Activated CD4-positive, alpha-beta T cell treated with anti-CD3 and anti-CD28 coated beads for 36 hours (primary cell): ENCODE measurements at regions of chr16 and their contacts with region 1.

Region 1: GRCh38 chr16:17467923-17468540 is 2.7 kb downstream of the XYLT1 start:
- DNase-seq: peak; percentile 72
- ATAC-seq: peak; percentile 17
- H3K4me3 Mint-ChIP-seq: peak overlapping the region; percentile 28
- H3K27ac Mint-ChIP-seq: peak overlapping the region; percentile 39
- H3K4me1 Mint-ChIP-seq: peaks cover 47% of the 10 kb centered on the region
- H3K27me3 Mint-ChIP-seq: no peaks in the 10 kb centered on the region

Region 2: DNA sequence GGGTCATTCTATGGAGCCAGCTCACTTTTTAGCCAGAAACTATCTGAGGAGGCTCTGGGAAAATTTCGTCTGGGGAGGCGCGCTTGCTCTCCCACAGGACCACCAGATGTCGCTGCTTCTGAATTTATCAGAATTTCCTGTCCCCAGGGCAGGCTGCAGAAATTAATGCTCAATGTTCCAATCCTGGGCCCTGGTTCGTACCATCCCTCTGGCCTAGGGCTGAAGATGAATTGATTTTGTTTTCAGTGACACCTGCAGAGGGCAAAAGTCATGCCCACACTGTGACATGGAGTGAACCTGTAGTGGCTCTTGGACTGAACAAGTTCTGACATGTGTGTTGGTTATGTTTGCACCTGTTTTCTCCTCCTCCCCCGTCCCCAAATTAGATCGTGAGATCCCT is 606.5 kb before region 1 on chr16:
- CTCF ChIA-PET with region 1: no interaction called
- POLR2A ChIA-PET with region 1: no interaction called
- intact Hi-C with region 1: loop called in 1 of 2 experiments (anchors 1 kb)
- DNase-seq: peak; percentile 70
- ATAC-seq: no peak
- H3K4me3 Mint-ChIP-seq: no peak overlapping the region
- H3K27ac Mint-ChIP-seq: no peak overlapping the region
- H3K4me1 Mint-ChIP-seq: no peaks in the 10 kb centered on the region
- H3K27me3 Mint-ChIP-seq: peaks cover 6% of the 10 kb centered on the region

Region 3: GRCh38 chr16:17211797-17212196 is 256.2 kb before region 1 on chr16:
- CTCF ChIA-PET with region 1: no interaction called
- POLR2A ChIA-PET with region 1: no interaction called
- intact Hi-C with region 1: loop called (anchors 5 to 10 kb)
- DNase-seq: peak; percentile 63
- ATAC-seq: peak; percentile 75
- H3K4me3 Mint-ChIP-seq: no peak overlapping the region
- H3K27ac Mint-ChIP-seq: no peak overlapping the region
- H3K4me1 Mint-ChIP-seq: peaks cover 17% of the 10 kb centered on the region
- H3K27me3 Mint-ChIP-seq: no peaks in the 10 kb centered on the region

Region 4: GRCh38 chr16:17277977-17278381 is 190.1 kb before region 1 on chr16:
- CTCF ChIA-PET with region 1: interaction called, 3 read pairs
- POLR2A ChIA-PET with region 1: interaction called, 5 read pairs
- intact Hi-C with region 1: loop called in 1 of 2 experiments (anchors 2 kb)
- DNase-seq: peak; percentile 20
- ATAC-seq: no peak
- H3K4me3 Mint-ChIP-seq: no peak overlapping the region
- H3K27ac Mint-ChIP-seq: no peak overlapping the region
- H3K4me1 Mint-ChIP-seq: peaks cover 31% of the 10 kb centered on the region
- H3K27me3 Mint-ChIP-seq: no peaks in the 10 kb centered on the region

Region 5: DNA sequence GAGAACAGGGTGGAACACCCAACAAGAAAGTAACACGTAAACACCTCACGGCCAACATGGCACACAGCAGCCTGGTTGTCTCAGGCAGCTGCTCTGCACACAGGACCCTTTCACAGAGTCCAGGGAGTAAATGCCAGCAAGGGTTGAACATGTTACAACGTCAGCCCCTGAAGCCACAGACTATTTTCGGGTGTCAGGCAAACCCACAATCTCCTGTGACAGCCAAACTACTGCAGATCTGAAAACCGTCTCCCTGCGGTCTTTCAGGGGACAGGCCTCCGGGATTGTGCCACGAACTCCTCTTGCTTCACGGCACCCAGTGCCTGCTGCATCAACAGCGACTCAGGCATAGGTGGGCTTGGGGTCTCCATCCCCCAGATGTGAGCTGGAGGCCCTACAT is 125.0 kb before region 1 on chr16:
- CTCF ChIA-PET with region 1: no interaction called
- POLR2A ChIA-PET with region 1: no interaction called
- intact Hi-C with region 1: no loop called
- DNase-seq: peak; percentile 57
- ATAC-seq: peak; percentile 43
- H3K4me3 Mint-ChIP-seq: no peak overlapping the region
- H3K27ac Mint-ChIP-seq: peak overlapping the region; percentile 49
- H3K4me1 Mint-ChIP-seq: peaks cover 70% of the 10 kb centered on the region
- H3K27me3 Mint-ChIP-seq: no peaks in the 10 kb centered on the region

Region 6: GRCh38 chr16:17354141-17354601 is 113.9 kb before region 1 on chr16:
- CTCF ChIA-PET with region 1: no interaction called
- POLR2A ChIA-PET with region 1: no interaction called
- intact Hi-C with region 1: no loop called
- DNase-seq: no peak
- ATAC-seq: no peak
- H3K4me3 Mint-ChIP-seq: no peak overlapping the region
- H3K27ac Mint-ChIP-seq: no peak overlapping the region
- H3K4me1 Mint-ChIP-seq: peaks cover 39% of the 10 kb centered on the region
- H3K27me3 Mint-ChIP-seq: no peaks in the 10 kb centered on the region

Region 7: DNA sequence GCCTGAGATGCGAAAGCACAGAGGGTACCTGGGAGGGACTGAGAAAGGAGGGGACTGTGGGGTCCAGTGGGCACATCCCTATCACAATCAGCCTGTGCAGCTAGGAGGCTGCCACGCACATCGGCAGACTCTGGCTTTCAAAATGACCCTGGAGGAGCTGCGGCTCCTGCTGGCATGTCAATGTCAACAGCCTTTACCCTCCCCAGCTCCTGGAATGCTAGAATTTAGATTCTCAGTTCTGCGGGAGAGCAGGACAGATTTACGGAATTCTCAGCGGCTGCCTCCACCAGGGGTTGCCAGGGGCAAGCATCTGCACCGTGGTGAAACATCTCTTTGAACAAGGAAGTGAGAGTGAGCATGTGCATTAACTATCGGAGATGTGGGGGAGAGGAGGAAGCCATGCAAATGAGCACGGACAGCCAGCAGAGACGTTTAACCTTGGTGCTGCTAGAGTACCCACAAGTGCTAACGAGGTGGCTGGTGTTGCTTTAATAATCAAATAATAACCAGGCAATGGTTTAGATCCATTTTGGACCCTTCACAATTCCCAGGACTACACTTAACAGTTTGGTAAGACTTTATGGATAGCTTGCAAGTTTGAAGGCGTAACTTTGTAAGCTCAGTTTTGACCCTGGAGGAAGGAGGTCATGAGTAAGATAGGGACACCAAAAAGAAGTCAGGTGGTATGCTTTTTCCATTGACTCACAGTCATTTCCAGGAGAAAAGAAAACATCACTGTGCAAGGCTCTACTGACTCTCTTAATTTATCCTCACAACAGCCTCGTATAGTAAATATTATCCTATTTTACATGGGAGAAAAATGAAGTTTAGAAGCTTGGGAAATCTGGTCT is 51.3 kb before region 1 on chr16:
- CTCF ChIA-PET with region 1: interaction called, 7 read pairs
- POLR2A ChIA-PET with region 1: interaction called, 6 read pairs
- intact Hi-C with region 1: loop called (anchors 1 to 5 kb)
- DNase-seq: peak; percentile 74
- ATAC-seq: peak; percentile 89
- H3K4me3 Mint-ChIP-seq: peak overlapping the region; percentile 69
- H3K27ac Mint-ChIP-seq: peak overlapping the region; percentile 93
- H3K4me1 Mint-ChIP-seq: peaks cover 50% of the 10 kb centered on the region
- H3K27me3 Mint-ChIP-seq: no peaks in the 10 kb centered on the region